Heart right ventricle (tissue), 16 donors: ENCODE measurements at regions of chr3 and their contacts with region 1.

Region 1: GRCh38 chr3:33144433-33144832 is 30.6 kb downstream of the CRTAP start:
- DNase-seq: no peak
- ATAC-seq: no peak
- H3K4me3 ChIP-seq: no peak overlapping the region
- H3K27ac ChIP-seq: no peak overlapping the region
- H3K4me1 ChIP-seq: peaks cover 0 to 18% (median 8%) of the 10 kb centered on the region in 9 donors
- H3K27me3 ChIP-seq: no peaks in the 10 kb centered on the region
- CTCF ChIP-seq: peak in 5 of 9 donors; percentile 13 to 39 (median 21)

Region 2: GRCh38 chr3:33074217-33075067 is 70.0 kb before region 1 on chr3:
- intact Hi-C with region 1: no loop called
- DNase-seq: peak; percentile 29 to 47
- ATAC-seq: peak in 6 of 8 donors; percentile 42 to 79 (median 65)
- H3K4me3 ChIP-seq: no peak overlapping the region
- H3K27ac ChIP-seq: no peak overlapping the region
- H3K4me1 ChIP-seq: peaks cover 0 to 10% (median 0%) of the 10 kb centered on the region in 9 donors
- H3K27me3 ChIP-seq: no peaks in the 10 kb centered on the region
- CTCF ChIP-seq: peak; percentile 69 to 90 (median 80)

Region 3: GRCh38 chr3:33211444-33211843 is 67.0 kb after region 1 on chr3:
- intact Hi-C with region 1: no loop called
- DNase-seq: no peak
- ATAC-seq: no peak
- H3K4me3 ChIP-seq: no peak overlapping the region
- H3K27ac ChIP-seq: no peak overlapping the region
- H3K4me1 ChIP-seq: no peaks in the 10 kb centered on the region
- H3K27me3 ChIP-seq: peaks cover 0 to 12% (median 5%) of the 10 kb centered on the region in 7 donors
- CTCF ChIP-seq: no peak

Region 4: GRCh38 chr3:33277193-33277882 is 132.9 kb after region 1 on chr3 and contains the start of gene FBXL2:
- intact Hi-C with region 1: no loop called
- DNase-seq: peak; percentile 50 to 72
- ATAC-seq: peak; percentile 91 to 98 (median 96)
- H3K4me3 ChIP-seq: peak within 1 kb of the TSS; percentile 64 to 89 (median 76)
- H3K27ac ChIP-seq: peak within 1 kb of the TSS in 5 of 10 donors; percentile 37 to 69 (median 46)
- H3K4me1 ChIP-seq: peaks cover 0 to 19% (median 8%) of the 10 kb centered on the region in 9 donors
- H3K27me3 ChIP-seq: peaks cover 0 to 21% (median 4%) of the 10 kb centered on the region in 7 donors
- CTCF ChIP-seq: no peak
- total RNA-seq, gene FBXL2: 0.87 to 3.6 (median 2.2) TPM

Region 5: GRCh38 chr3:33287672-33288282 is 143.3 kb after region 1 on chr3:
- intact Hi-C with region 1: no loop called
- DNase-seq: no peak
- ATAC-seq: no peak
- H3K4me3 ChIP-seq: no peak overlapping the region
- H3K27ac ChIP-seq: no peak overlapping the region
- H3K4me1 ChIP-seq: no peaks in the 10 kb centered on the region
- H3K27me3 ChIP-seq: no peaks in the 10 kb centered on the region
- CTCF ChIP-seq: no peak

Region 6: GRCh38 chr3:33360136-33360825 is 215.8 kb after region 1 on chr3:
- intact Hi-C with region 1: loop called in 1 of 10 experiments (anchors 5 kb)
- DNase-seq: no peak
- ATAC-seq: no peak
- H3K4me3 ChIP-seq: no peak overlapping the region
- H3K27ac ChIP-seq: no peak overlapping the region
- H3K4me1 ChIP-seq: peaks cover 0 to 8% (median 2%) of the 10 kb centered on the region in 9 donors
- H3K27me3 ChIP-seq: no peaks in the 10 kb centered on the region
- CTCF ChIP-seq: no peak